ENCODE measurements at regions of chr11 and their contacts with region 1.

Region 1: DNA sequence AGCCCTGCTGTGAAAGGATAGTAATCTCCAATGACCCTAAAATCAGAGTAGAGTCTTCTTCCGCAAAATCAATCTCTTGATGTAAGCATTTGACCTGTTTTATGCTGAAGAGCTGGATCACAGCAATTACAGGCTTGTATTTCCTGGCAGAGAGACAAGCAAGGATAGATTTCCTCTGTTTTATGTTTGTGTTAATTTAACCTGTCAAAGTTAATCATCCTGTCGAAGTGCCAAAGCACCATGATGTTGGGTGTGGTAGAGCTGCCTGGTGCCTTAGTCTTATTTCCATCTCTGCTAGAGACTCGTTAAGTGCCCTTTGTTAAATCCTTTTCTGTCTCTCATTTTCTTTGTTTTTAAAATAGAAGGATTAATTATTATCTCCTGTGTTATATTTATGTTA is 248.1 kb downstream of the CNTN5 start:
- DNase-seq: peak; percentile 18
- ATAC-seq: peak; percentile 62
- H3K4me3 ChIP-seq: no peak overlapping the region
- H3K27ac ChIP-seq: no peak overlapping the region
- H3K4me1 ChIP-seq: no peaks in the 10 kb centered on the region
- H3K27me3 ChIP-seq: no peaks in the 10 kb centered on the region
- CTCF ChIP-seq: no peak

Region 2: DNA sequence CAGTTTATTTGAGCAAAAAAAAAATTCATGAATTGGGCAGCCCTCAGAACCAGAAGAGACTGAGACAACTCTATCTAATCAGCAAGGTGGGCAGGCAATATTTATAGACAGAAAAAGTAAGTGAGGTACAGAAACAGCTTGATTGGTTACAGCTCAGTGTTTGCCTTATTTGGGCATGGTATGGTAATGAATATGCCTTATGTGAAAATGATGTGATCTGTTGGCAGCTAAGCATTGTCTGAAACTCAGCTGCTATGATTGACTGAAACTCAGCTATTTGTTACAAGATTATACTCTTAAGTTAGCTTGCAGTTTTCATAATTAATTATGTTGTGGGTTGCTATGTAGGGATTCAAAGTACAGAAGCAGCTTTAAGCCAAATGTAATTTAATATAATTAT is 120.5 kb before region 1 on chr11:
- CTCF ChIA-PET with region 1: no interaction called
- POLR2A ChIA-PET with region 1: no interaction called
- intact Hi-C with region 1: no loop called
- DNase-seq: no peak
- ATAC-seq: no peak
- H3K4me3 ChIP-seq: no peak overlapping the region
- H3K27ac ChIP-seq: no peak overlapping the region
- H3K4me1 ChIP-seq: no peaks in the 10 kb centered on the region
- H3K27me3 ChIP-seq: no peaks in the 10 kb centered on the region
- CTCF ChIP-seq: no peak

Region 3: DNA sequence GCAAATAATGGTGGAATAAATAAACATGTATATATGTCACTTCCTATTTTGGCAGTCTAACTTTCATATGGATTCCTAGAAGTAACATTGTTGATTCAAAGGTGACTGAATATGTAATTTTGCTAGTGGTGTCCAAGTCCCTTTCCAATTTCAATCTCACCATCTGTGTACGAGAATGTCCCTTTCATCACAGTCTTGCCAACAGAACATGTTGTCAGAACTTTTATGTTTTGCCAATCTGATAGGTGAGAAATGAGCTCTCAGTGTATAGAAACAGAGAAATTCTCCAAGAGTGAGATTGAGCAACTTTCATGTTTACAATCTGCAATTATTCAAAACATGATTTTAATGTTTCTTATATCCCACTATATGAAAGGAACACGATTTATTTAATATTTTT is 80.7 kb before region 1 on chr11:
- CTCF ChIA-PET with region 1: no interaction called
- POLR2A ChIA-PET with region 1: no interaction called
- intact Hi-C with region 1: no loop called
- DNase-seq: no peak
- ATAC-seq: no peak
- H3K4me3 ChIP-seq: no peak overlapping the region
- H3K27ac ChIP-seq: no peak overlapping the region
- H3K4me1 ChIP-seq: no peaks in the 10 kb centered on the region
- H3K27me3 ChIP-seq: no peaks in the 10 kb centered on the region
- CTCF ChIP-seq: no peak

Region 4: GRCh38 chr11:99446400-99446799 is 177.5 kb after region 1 on chr11:
- CTCF ChIA-PET with region 1: no interaction called
- POLR2A ChIA-PET with region 1: no interaction called
- intact Hi-C with region 1: loop called (anchors 5 kb)
- DNase-seq: no peak
- ATAC-seq: no peak
- H3K4me3 ChIP-seq: no peak overlapping the region
- H3K27ac ChIP-seq: no peak overlapping the region
- H3K4me1 ChIP-seq: peaks cover 10% of the 10 kb centered on the region; the same call in 1 of the 2 replicates
- H3K27me3 ChIP-seq: no peaks in the 10 kb centered on the region
- CTCF ChIP-seq: no peak

Measured in PC-3 (cell line).